ENCODE measurements at regions of chr12 and their contacts with region 1.

Region 1: DNA sequence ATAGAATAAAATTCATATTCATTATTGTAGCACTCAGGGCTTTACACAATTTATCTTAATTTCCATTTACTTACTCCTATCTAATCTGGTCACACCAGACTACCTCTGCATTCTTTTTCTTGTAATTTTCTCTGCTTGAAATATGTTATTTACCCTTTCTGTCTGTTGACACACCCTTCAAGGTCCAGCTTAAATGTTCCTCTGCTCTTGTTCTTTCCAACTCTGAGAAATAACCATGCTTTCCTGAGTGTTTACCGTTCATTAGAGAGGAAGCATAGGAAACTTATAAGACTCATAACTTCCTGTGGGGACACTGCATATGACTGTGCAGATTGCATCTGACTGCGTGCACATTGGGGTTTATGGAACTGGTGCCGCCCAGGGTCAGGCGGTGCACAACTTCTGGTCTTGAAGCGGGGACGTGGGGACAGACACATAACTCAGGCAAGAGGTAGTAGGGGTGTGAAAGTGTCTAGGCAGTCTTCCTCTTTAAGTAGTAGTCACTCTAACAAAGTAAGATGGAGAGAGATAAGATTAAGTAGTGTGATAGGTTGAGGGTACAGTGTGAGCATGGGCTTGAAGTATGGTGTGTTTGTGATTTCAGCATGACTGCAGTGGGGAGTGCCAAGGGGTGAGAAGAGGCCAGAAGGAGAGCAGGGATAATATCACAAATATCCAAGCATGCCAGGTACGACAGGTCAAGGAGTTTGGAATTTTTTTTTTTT is 42.5 kb upstream of the FOXJ2 start:
- DNase-seq: peak; percentile 70 to 94
- H3K4me3 ChIP-seq: no peak overlapping the region
- H3K27ac ChIP-seq: peak overlapping the region; percentile 79
- H3K4me1 ChIP-seq: peaks cover 62% of the 10 kb centered on the region
- H3K27me3 ChIP-seq: no peaks in the 10 kb centered on the region
- CTCF ChIP-seq: no peak

Region 2: DNA sequence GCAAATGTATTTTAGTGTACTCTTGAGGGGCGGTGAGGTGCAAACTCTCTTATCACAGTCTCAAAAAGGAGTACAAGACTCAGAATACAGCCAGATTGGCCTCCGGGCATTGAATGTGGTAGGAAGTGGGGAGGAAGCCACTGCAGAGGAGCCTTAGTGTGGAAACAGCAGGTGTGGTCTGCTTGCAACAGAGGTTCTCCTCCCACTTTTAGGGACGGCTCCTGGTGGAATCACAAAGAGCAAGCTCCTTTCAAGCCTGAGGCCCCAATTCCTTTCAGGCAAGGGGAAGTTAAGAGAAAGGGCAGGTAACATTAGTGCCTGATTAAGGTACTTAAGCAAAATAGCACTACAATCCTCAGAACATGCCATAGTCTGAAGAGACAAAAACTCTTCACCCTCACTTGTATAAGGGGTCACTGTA is 30.3 kb before region 1 on chr12:
- CTCF ChIA-PET with region 1: interaction called, 10 read pairs
- POLR2A ChIA-PET with region 1: interaction called, 7 read pairs
- intact Hi-C with region 1: loop called (anchors 1 kb)
- DNase-seq: peak; percentile 81 to 96
- H3K4me3 ChIP-seq: peak overlapping the region; percentile 63; the same call in 1 of the 2 replicates
- H3K27ac ChIP-seq: peak overlapping the region; percentile 75
- H3K4me1 ChIP-seq: peaks cover 35% of the 10 kb centered on the region
- H3K27me3 ChIP-seq: no peaks in the 10 kb centered on the region
- CTCF ChIP-seq: no peak

Region 3: DNA sequence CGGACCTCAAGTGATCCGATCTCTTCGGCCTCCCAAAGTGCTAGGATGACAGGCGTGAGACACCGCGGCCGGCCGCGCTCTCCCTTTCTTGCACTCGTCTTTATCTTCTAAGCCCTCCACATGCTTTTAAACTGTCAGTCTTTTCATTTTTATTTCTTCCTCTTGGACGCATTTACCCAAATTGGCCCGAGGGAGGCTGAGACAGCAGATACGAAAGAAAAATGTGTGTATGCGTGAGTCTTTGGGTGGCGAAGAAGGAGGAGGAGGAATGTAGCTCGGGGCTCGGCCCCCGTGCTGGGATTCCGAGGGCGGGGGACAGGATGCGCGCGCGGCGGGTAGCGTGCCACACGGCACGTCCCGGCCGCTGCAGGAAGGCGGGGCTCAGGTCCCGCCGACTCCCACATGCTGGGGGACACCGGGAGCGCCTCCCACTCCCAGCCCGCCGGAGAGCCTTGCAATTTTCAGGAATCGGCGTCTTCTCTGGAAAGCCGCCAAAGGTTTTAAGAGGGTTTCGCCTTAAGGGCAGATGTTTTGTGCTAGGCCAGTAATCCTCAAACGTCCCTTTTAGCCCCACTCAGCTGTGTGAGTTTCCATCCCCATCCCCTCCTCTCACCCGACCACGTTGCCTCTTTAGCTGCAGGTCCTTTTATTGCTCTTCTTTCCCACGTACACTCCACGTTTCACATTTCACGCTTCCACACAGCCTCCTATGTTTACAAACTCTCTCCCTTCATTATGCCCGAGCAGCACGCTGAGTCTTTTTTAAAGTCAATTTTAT is 19.3 kb before region 1 on chr12:
- CTCF ChIA-PET with region 1: interaction called, 7 read pairs
- POLR2A ChIA-PET with region 1: interaction called, 14 read pairs
- intact Hi-C with region 1: loop called (anchors 1 kb)
- DNase-seq: peak; percentile 90 to 98
- H3K4me3 ChIP-seq: peak overlapping the region; percentile 58
- H3K27ac ChIP-seq: peak overlapping the region; percentile 65
- H3K4me1 ChIP-seq: peaks cover 18% of the 10 kb centered on the region
- H3K27me3 ChIP-seq: no peaks in the 10 kb centered on the region
- CTCF ChIP-seq: no peak

Region 4: DNA sequence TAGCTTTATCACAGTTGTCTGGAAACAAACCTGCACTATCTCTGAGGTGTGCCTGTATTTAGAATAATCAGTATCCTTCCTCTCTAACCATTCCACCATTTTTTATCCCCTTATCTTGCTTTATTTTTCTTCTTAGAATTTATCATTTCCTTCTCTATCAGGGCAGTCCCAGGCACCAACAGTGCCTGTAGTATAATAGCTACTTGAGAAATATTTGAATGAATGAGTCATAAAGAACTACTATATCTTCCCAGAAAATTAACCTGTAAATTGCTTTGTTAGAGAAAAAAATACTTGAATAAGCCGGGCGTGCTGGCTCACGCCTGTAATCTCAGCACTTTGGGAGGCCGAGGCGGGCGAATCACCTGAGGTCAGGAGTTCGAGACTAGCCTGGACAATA is 21.3 kb after region 1 on chr12:
- CTCF ChIA-PET with region 1: no interaction called
- POLR2A ChIA-PET with region 1: interaction called, 39 read pairs
- intact Hi-C with region 1: no loop called
- DNase-seq: peak in 1 of 2 experiments; percentile 85
- H3K4me3 ChIP-seq: no peak overlapping the region
- H3K27ac ChIP-seq: peak overlapping the region; percentile 26
- H3K4me1 ChIP-seq: peaks cover 6% of the 10 kb centered on the region
- H3K27me3 ChIP-seq: no peaks in the 10 kb centered on the region
- CTCF ChIP-seq: no peak

Region 5: DNA sequence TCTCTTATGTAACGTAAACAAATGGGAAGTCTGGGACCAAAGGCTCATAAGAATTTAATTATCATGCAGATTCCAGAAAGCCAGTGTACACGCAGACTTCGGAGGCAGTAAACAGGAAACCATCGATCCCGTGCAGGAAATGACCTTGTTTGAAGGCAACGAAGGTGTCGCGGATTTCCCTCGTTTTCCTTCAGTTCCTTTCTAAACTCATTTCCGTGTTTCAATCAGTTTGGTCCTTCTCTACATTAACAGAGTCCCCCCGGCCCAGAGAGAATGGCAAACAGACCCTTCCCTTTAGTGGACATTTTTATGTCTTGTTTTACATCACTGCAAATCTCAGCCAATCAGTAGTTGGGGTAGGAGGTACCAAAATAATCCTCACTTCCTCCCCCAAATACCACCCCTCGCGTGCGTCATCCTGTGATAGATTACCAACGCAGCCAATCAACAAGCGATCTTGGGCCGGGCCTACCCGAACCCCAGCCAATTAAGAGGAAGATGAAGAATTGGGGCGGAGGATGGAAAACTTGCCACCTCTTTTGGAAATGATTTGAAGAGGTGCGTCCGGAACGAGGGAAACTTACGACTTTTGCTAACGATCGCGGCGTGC is 36.4 kb after region 1 on chr12:
- CTCF ChIA-PET with region 1: no interaction called
- POLR2A ChIA-PET with region 1: no interaction called
- intact Hi-C with region 1: loop called (anchors 2 kb)
- DNase-seq: peak; percentile 98
- H3K4me3 ChIP-seq: peak overlapping the region; percentile 70
- H3K27ac ChIP-seq: peak overlapping the region; percentile 89
- H3K4me1 ChIP-seq: peaks cover 13% of the 10 kb centered on the region
- H3K27me3 ChIP-seq: no peaks in the 10 kb centered on the region
- CTCF ChIP-seq: no peak

Region 6: DNA sequence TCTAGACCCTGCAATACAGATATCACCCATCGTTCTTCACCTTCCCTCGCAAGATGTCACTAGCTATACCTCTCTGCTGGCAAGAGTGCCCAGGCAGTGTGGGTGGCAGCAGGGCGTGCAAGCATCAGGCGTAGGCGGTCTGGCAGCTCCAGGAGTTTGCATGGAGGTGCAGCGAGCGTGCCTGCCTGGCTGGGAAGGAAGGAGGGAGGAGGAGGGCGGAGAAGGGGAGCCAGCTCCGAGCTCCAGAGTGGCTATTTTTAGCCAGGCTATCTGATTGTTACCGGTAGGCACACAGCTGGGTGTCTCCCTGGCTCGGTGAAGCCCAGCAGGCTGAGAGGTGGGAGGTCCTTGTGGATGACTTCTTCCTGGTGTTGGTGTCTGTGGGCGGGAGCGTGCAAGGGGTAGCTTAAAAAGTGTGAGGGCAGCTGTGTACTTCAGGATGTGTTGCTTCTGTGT is 48.7 kb after region 1 on chr12:
- CTCF ChIA-PET with region 1: interaction called, 10 read pairs
- POLR2A ChIA-PET with region 1: no interaction called
- intact Hi-C with region 1: no loop called
- DNase-seq: peak in 1 of 2 experiments; percentile 70
- H3K4me3 ChIP-seq: no peak overlapping the region
- H3K27ac ChIP-seq: no peak overlapping the region
- H3K4me1 ChIP-seq: peaks cover 32% of the 10 kb centered on the region
- H3K27me3 ChIP-seq: no peaks in the 10 kb centered on the region
- CTCF ChIP-seq: no peak